HepG2 (cell line): ENCODE measurements at regions of chr10 and their contacts with region 1.

Region 1: GRCh38 chr10:13528875-13529713 is at the start of gene BEND7:
- DNase-seq: no peak
- ATAC-seq: peak; percentile 90
- H3K4me3 ChIP-seq: peak within 1 kb of the TSS; percentile 81 to 96 (median 86)
- H3K27ac ChIP-seq: peak within 1 kb of the TSS; percentile 65
- H3K4me1 ChIP-seq: peaks cover 26% of the 10 kb centered on the region
- H3K27me3 ChIP-seq: no peaks in the 10 kb centered on the region
- CTCF ChIP-seq: no peak
- EP300 ChIP-seq: no peak
- POLR2A ChIP-seq: no peak; a peak in 1 of 4 replicates
- RAD21 ChIP-seq: no peak
- total RNA-seq, gene BEND7: 15.4 and 17.1 TPM in 2 replicates

Region 2: GRCh38 chr10:13462551-13462950 is 66.5 kb before region 1 on chr10:
- CTCF ChIA-PET with region 1: no interaction called
- POLR2A ChIA-PET with region 1: no interaction called
- in situ Hi-C with region 1: no loop called
- intact Hi-C with region 1: no loop called
- DNase-seq: no peak
- ATAC-seq: no peak
- H3K4me3 ChIP-seq: no peak overlapping the region
- H3K27ac ChIP-seq: no peak overlapping the region
- H3K4me1 ChIP-seq: no peaks in the 10 kb centered on the region
- H3K27me3 ChIP-seq: no peaks in the 10 kb centered on the region
- CTCF ChIP-seq: no peak
- EP300 ChIP-seq: no peak
- POLR2A ChIP-seq: no peak
- RAD21 ChIP-seq: no peak

Region 3: GRCh38 chr10:13485623-13486022 is 43.5 kb before region 1 on chr10:
- CTCF ChIA-PET with region 1: interaction called, 3 read pairs
- POLR2A ChIA-PET with region 1: no interaction called
- in situ Hi-C with region 1: no loop called
- intact Hi-C with region 1: loop called (anchors 5 kb)
- DNase-seq: no peak
- ATAC-seq: no peak
- H3K4me3 ChIP-seq: no peak overlapping the region
- H3K27ac ChIP-seq: no peak overlapping the region
- H3K4me1 ChIP-seq: no peaks in the 10 kb centered on the region
- H3K27me3 ChIP-seq: no peaks in the 10 kb centered on the region
- CTCF ChIP-seq: no peak
- EP300 ChIP-seq: no peak
- POLR2A ChIP-seq: no peak
- RAD21 ChIP-seq: no peak

Region 4: GRCh38 chr10:13511409-13511808 is 17.7 kb before region 1 on chr10:
- CTCF ChIA-PET with region 1: no interaction called
- POLR2A ChIA-PET with region 1: no interaction called
- in situ Hi-C with region 1: no loop called
- intact Hi-C with region 1: no loop called
- DNase-seq: no peak
- ATAC-seq: no peak
- H3K4me3 ChIP-seq: no peak overlapping the region
- H3K27ac ChIP-seq: no peak overlapping the region
- H3K4me1 ChIP-seq: peaks cover 11% of the 10 kb centered on the region
- H3K27me3 ChIP-seq: no peaks in the 10 kb centered on the region
- CTCF ChIP-seq: no peak
- EP300 ChIP-seq: no peak
- POLR2A ChIP-seq: no peak
- RAD21 ChIP-seq: no peak

Region 5: DNA sequence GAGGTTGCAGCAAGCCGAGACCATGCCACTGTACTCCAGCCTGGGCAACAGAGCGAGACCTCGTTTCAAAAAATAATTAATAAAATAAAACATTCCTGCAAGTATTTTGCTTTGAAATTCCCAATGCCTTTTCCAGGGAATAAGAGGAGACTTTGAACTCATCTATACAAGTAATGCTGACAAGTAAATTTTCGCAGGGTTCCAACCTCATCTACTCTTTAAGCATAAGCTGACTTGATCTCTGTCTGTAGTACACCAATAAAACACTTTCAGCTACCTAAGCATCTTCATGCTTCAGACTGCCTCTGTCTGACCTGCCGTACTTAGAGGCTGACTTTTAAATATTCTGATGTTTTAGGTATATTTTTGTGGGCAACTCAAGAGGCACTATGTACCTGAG is 13.4 kb after region 1 on chr10:
- CTCF ChIA-PET with region 1: no interaction called
- POLR2A ChIA-PET with region 1: no interaction called
- in situ Hi-C with region 1: no loop called
- intact Hi-C with region 1: no loop called
- DNase-seq: no peak
- ATAC-seq: no peak
- H3K4me3 ChIP-seq: no peak overlapping the region
- H3K27ac ChIP-seq: no peak overlapping the region
- H3K4me1 ChIP-seq: no peaks in the 10 kb centered on the region
- H3K27me3 ChIP-seq: peaks cover 1 to 24% of the 10 kb centered on the region in 2 experiments; a peak in 4 of 5 replicates
- CTCF ChIP-seq: no peak
- EP300 ChIP-seq: no peak
- POLR2A ChIP-seq: no peak
- RAD21 ChIP-seq: no peak

Region 6: DNA sequence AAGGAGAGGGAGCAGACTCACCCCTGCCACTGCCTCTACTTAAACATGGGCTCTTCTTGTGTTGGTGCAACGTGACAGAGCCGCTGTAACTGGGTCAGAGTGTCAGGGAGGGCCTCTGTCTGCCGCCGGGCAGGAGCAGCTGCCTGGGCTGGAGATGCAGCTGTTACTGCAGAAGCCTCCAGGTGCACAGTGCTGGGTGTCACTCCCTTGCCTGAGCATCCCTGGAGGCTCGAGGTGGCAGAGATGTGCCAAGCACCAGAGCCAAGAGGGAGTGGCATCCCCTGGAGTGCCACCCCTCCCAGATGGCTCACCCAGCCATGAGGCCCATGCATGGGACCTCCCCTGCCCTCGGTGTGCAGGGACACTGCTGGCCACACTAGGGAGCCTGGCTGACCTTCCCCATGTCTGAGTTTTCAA is 203.4 kb after region 1 on chr10:
- CTCF ChIA-PET with region 1: no interaction called
- POLR2A ChIA-PET with region 1: no interaction called
- in situ Hi-C with region 1: no loop called
- intact Hi-C with region 1: no loop called
- DNase-seq: no peak
- ATAC-seq: peak; percentile 35; the same call in 2 of the 3 replicates
- H3K4me3 ChIP-seq: no peak overlapping the region
- H3K27ac ChIP-seq: no peak overlapping the region
- H3K4me1 ChIP-seq: no peaks in the 10 kb centered on the region
- H3K27me3 ChIP-seq: peaks cover 0 to 13% of the 10 kb centered on the region in 2 experiments; a peak in 2 of 5 replicates
- CTCF ChIP-seq: no peak
- EP300 ChIP-seq: no peak
- POLR2A ChIP-seq: no peak
- RAD21 ChIP-seq: no peak